CD4-positive, alpha-beta T cell (primary cell): ENCODE measurements at regions of chr16 and their contacts with region 1.

Region 1: GRCh38 chr16:28140788-28141618 is 70.8 kb downstream of the XPO6 start:
- DNase-seq: peak; percentile 47 to 96 (median 65)
- ATAC-seq: peak; percentile 75
- H3K4me3 ChIP-seq: peak overlapping the region; percentile 44
- H3K4me3 Mint-ChIP-seq: peak overlapping the region; percentile 65
- H3K27ac ChIP-seq: peak overlapping the region; percentile 80 to 81
- H3K27ac Mint-ChIP-seq: peak overlapping the region; percentile 97
- H3K4me1 ChIP-seq: peaks cover 84% of the 10 kb centered on the region
- H3K4me1 Mint-ChIP-seq: peaks cover 89% of the 10 kb centered on the region
- H3K27me3 ChIP-seq: no peaks in the 10 kb centered on the region
- H3K27me3 Mint-ChIP-seq: no peaks in the 10 kb centered on the region
- CTCF ChIP-seq: peak; percentile 39

Region 2: GRCh38 chr16:27859020-27859419 is 282.0 kb before region 1 on chr16:
- CTCF ChIA-PET with region 1: no interaction called
- POLR2A ChIA-PET with region 1: no interaction called
- intact Hi-C with region 1: no loop called
- DNase-seq: no peak
- ATAC-seq: no peak
- H3K4me3 ChIP-seq: no peak overlapping the region
- H3K4me3 Mint-ChIP-seq: no peak overlapping the region
- H3K27ac ChIP-seq: no peak overlapping the region
- H3K27ac Mint-ChIP-seq: no peak overlapping the region
- H3K4me1 ChIP-seq: no peaks in the 10 kb centered on the region
- H3K4me1 Mint-ChIP-seq: no peaks in the 10 kb centered on the region
- H3K27me3 ChIP-seq: peaks cover 0 to under 1% of the 10 kb centered on the region in 2 experiments
- H3K27me3 Mint-ChIP-seq: no peaks in the 10 kb centered on the region
- CTCF ChIP-seq: no peak

Region 3: GRCh38 chr16:28063641-28064061 is 77.4 kb before region 1 on chr16 and contains the start of gene GSG1L:
- CTCF ChIA-PET with region 1: no interaction called
- POLR2A ChIA-PET with region 1: no interaction called
- intact Hi-C with region 1: no loop called
- DNase-seq: peak in 1 of 14 experiments; percentile 11
- ATAC-seq: no peak
- H3K4me3 ChIP-seq: no peak within 1 kb of the TSS
- H3K4me3 Mint-ChIP-seq: no peak within 1 kb of the TSS
- H3K27ac ChIP-seq: no peak within 1 kb of the TSS
- H3K27ac Mint-ChIP-seq: no peak within 1 kb of the TSS
- H3K4me1 ChIP-seq: peaks cover 2% of the 10 kb centered on the region
- H3K4me1 Mint-ChIP-seq: no peaks in the 10 kb centered on the region
- H3K27me3 ChIP-seq: peaks cover 26 to 45% of the 10 kb centered on the region in 2 experiments
- H3K27me3 Mint-ChIP-seq: peaks cover 53% of the 10 kb centered on the region
- CTCF ChIP-seq: no peak
- total RNA-seq, gene GSG1L: not detected

Region 4: DNA sequence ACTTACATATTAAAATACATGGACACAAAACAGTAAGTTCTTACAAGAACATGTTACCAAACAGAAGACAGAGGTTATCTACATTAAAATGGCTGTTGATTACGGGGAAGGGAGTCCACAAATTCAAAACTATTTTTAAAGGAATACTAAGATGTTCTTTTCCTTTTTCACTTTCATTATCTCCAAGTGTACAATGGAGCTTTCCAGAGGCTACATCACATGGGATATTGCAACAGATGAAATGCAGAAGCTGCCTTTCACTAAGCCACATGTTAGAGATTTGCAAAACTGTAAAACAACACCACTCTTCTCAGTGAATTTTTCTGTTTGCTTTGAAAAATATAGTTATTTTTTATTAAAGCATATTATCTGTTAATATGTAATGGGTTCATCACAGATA is 17.1 kb after region 1 on chr16:
- CTCF ChIA-PET with region 1: interaction called, 14 read pairs
- POLR2A ChIA-PET with region 1: interaction called, 5 read pairs
- intact Hi-C with region 1: no loop called
- DNase-seq: no peak
- ATAC-seq: no peak
- H3K4me3 ChIP-seq: no peak overlapping the region
- H3K4me3 Mint-ChIP-seq: no peak overlapping the region
- H3K27ac ChIP-seq: no peak overlapping the region
- H3K27ac Mint-ChIP-seq: peak overlapping the region; percentile 45
- H3K4me1 ChIP-seq: peaks cover 24% of the 10 kb centered on the region
- H3K4me1 Mint-ChIP-seq: peaks cover 85% of the 10 kb centered on the region
- H3K27me3 ChIP-seq: no peaks in the 10 kb centered on the region
- H3K27me3 Mint-ChIP-seq: no peaks in the 10 kb centered on the region
- CTCF ChIP-seq: no peak

Region 5: GRCh38 chr16:28181515-28181914 is 40.5 kb after region 1 on chr16:
- CTCF ChIA-PET with region 1: interaction called, 12 read pairs
- POLR2A ChIA-PET with region 1: interaction called, 11 read pairs
- intact Hi-C with region 1: loop called in 1 of 2 experiments (anchors 5 kb)
- DNase-seq: no peak
- ATAC-seq: no peak
- H3K4me3 ChIP-seq: no peak overlapping the region
- H3K4me3 Mint-ChIP-seq: peak overlapping the region; percentile 69
- H3K27ac ChIP-seq: peak overlapping the region; percentile 18 to 52
- H3K27ac Mint-ChIP-seq: peak overlapping the region; percentile 85
- H3K4me1 ChIP-seq: peaks cover 63% of the 10 kb centered on the region
- H3K4me1 Mint-ChIP-seq: peaks cover 93% of the 10 kb centered on the region
- H3K27me3 ChIP-seq: no peaks in the 10 kb centered on the region
- H3K27me3 Mint-ChIP-seq: no peaks in the 10 kb centered on the region
- CTCF ChIP-seq: no peak

Region 6: GRCh38 chr16:28202147-28202746 is 61.2 kb after region 1 on chr16:
- CTCF ChIA-PET with region 1: interaction called, 10 read pairs
- POLR2A ChIA-PET with region 1: interaction called, 5 read pairs
- intact Hi-C with region 1: no loop called
- DNase-seq: peak in 5 of 14 experiments; percentile 12 to 60 (median 51)
- ATAC-seq: peak; percentile 88
- H3K4me3 ChIP-seq: no peak overlapping the region
- H3K4me3 Mint-ChIP-seq: peak overlapping the region; percentile 62
- H3K27ac ChIP-seq: peak overlapping the region in 1 of 2 donors; percentile 51
- H3K27ac Mint-ChIP-seq: no peak overlapping the region
- H3K4me1 ChIP-seq: peaks cover 62% of the 10 kb centered on the region
- H3K4me1 Mint-ChIP-seq: peaks cover 33% of the 10 kb centered on the region
- H3K27me3 ChIP-seq: no peaks in the 10 kb centered on the region
- H3K27me3 Mint-ChIP-seq: no peaks in the 10 kb centered on the region
- CTCF ChIP-seq: peak; percentile 10

Region 7: GRCh38 chr16:28277537-28278388 is 136.8 kb after region 1 on chr16:
- CTCF ChIA-PET with region 1: interaction called, 3 read pairs
- POLR2A ChIA-PET with region 1: interaction called, 6 read pairs
- intact Hi-C with region 1: loop called in 1 of 2 experiments (anchors 5 kb)
- DNase-seq: peak; percentile 71 to 93 (median 84)
- ATAC-seq: peak; percentile 88
- H3K4me3 ChIP-seq: peak overlapping the region; percentile 61
- H3K4me3 Mint-ChIP-seq: peak overlapping the region; percentile 79
- H3K27ac ChIP-seq: peak overlapping the region; percentile 39 to 42
- H3K27ac Mint-ChIP-seq: peak overlapping the region; percentile 91
- H3K4me1 ChIP-seq: peaks cover 43% of the 10 kb centered on the region
- H3K4me1 Mint-ChIP-seq: peaks cover 53% of the 10 kb centered on the region
- H3K27me3 ChIP-seq: no peaks in the 10 kb centered on the region
- H3K27me3 Mint-ChIP-seq: no peaks in the 10 kb centered on the region
- CTCF ChIP-seq: peak; percentile 99

Region 8: DNA sequence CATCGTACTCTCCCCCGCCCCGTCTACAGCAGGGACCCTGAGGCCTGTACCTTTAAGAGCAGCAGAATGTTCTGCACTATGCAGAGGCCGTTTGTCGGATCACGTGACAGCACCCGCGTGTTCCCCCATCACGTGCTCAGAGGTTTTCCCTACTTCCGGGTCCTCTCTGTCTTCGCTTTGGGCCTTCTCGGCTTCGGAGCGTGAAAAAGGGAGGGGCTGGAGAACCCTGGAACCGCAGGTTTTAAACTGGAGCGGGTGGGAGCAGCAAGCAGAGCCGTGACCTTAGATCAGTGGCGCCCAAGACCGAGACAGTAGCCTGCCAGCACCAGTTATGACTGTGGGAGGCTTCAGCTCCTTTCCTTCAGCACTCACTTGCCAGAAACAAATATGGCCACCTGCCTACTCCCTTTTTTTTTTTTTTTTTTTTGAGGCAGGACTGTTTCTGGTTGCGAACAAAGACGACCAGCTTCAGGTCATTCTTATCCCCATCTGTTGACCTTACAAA is 351.0 kb after region 1 on chr16 and contains the start of gene CLN3:
- CTCF ChIA-PET with region 1: no interaction called
- POLR2A ChIA-PET with region 1: interaction called, 7 read pairs
- intact Hi-C with region 1: loop called in 1 of 2 experiments (anchors 1 kb)
- DNase-seq: peak; percentile 75 to 95 (median 82)
- ATAC-seq: peak; percentile 56
- H3K4me3 ChIP-seq: peak within 1 kb of the TSS; percentile 78
- H3K4me3 Mint-ChIP-seq: peak within 1 kb of the TSS; percentile 92
- H3K27ac ChIP-seq: peak within 1 kb of the TSS; percentile 90 to 97
- H3K27ac Mint-ChIP-seq: peak within 1 kb of the TSS; percentile 99
- H3K4me1 ChIP-seq: peaks cover 86% of the 10 kb centered on the region
- H3K4me1 Mint-ChIP-seq: peaks cover 65% of the 10 kb centered on the region
- H3K27me3 ChIP-seq: no peaks in the 10 kb centered on the region
- H3K27me3 Mint-ChIP-seq: no peaks in the 10 kb centered on the region
- CTCF ChIP-seq: no peak
- total RNA-seq, gene CLN3: 42.7 to 46.3 TPM